Esophagus squamous epithelium (tissue), 5 donors: ENCODE measurements at regions of chr1 and their contacts with region 1.

Region 1: GRCh38 chr1:30719406-30720270 is 3.7 kb downstream of the MATN1 start:
- DNase-seq: no peak
- H3K4me3 ChIP-seq: peak overlapping the region; percentile 39 to 76 (median 66)
- H3K27ac ChIP-seq: peak overlapping the region; percentile 93 to 100 (median 99)
- H3K4me1 ChIP-seq: peaks cover 0 to 26% (median 7%) of the 10 kb centered on the region in 3 donors
- H3K27me3 ChIP-seq: no peaks in the 10 kb centered on the region
- CTCF ChIP-seq: no peak
- POLR2A ChIP-seq: no peak

Region 2: DNA sequence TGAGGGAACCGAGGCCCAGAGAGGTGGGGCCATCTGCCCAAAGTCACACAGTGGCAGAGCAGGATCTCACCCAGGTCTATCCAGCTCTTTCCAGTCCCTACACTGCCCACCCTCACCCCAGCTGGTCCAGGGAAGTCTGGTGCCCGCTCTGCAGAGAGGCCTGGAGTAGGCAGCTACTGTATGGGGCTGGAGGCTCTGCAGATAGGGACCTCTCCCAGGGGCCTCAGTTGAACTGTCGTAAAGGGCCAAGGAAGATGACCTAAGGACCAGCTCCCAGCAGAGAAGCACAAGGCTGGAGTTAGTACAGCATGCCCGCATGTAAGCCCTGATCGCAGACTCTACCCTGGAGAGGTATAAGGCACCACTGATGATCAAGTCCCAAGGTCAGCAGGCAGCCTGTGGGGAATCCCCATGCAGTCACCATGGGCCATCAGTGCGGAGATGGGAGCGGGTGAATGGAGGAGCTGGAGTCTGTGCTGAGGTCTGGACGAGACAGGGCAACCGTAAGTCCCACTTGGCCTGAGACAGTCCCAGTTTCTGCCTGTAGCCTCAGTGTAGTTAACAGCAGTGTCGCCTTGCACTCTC is 316.5 kb before region 1 on chr1:
- intact Hi-C with region 1: no loop called
- DNase-seq: no peak
- H3K4me3 ChIP-seq: no peak overlapping the region
- H3K27ac ChIP-seq: no peak overlapping the region
- H3K4me1 ChIP-seq: no peaks in the 10 kb centered on the region
- H3K27me3 ChIP-seq: peaks cover 0 to 7% (median 0%) of the 10 kb centered on the region in 4 donors
- CTCF ChIP-seq: no peak
- POLR2A ChIP-seq: no peak

Region 3: DNA sequence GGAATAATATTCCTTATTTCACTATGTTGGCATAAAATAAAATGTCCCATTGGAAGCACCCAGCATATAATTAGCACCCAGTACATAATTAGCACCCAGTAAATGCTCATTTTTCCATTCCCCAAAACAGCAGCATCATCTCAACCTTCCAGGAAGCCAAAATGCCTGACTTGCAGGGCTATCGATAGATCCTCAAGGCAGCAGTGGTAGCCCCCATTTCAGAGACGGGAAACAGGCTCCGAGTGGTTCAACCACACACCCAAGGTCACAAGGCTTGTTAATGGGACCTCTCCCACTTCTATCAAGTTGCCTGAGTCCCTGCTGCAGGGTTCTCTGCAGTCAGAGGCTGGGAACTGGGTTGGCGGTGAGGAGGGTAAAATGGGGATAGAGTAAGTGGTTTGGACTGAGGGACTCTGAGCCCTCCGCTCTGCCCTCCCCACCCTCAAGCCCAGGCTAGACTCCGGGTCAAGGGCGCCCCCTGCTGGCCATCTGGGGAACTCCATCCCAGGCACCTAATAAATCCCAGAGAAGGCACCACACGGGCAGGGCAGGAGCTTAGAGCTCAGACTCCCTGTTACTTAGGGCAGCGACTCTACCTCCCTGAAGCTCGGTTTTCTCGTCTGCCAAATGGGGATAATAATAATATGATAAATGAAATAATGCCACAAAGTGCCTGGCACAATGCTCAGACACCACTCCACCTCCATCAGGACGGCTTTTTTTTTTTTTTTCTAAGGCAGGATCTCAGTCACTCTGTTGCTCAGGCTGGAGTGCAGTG is 59.8 kb after region 1 on chr1:
- intact Hi-C with region 1: loop called (anchors 5 kb)
- DNase-seq: no peak
- H3K4me3 ChIP-seq: no peak overlapping the region
- H3K27ac ChIP-seq: no peak overlapping the region
- H3K4me1 ChIP-seq: peaks cover 0 to 15% (median 5%) of the 10 kb centered on the region in 3 donors
- H3K27me3 ChIP-seq: peaks cover 0 to 40% (median 0%) of the 10 kb centered on the region in 4 donors
- CTCF ChIP-seq: peak; percentile 98 to 99 (median 98)
- POLR2A ChIP-seq: no peak